ENCODE measurements at regions of chr7 and their contacts with region 1.

Region 1: DNA sequence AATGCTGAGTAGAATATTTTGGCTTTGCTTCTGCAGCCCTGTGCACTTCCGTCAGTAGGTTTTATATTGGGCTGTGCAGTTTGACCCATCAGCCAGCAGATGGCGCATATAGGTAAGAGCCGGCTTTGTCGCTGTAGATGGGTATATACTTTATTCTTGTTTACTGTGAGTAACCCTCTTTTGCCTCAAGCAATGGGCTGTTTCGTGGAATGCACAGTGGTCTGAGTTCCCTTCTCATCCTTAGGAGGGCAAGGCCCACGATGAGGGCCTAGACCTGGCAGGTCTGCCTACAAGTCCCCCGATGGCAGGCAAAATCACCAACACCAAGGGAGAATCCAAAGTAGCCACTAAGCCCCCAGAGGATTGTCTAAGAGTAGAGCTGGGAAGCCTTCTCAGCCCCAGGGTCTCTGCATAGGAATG is 1002.9 kb upstream of the KCND2 start:
- DNase-seq: peak; percentile 15 to 92 (median 54)

Region 2: DNA sequence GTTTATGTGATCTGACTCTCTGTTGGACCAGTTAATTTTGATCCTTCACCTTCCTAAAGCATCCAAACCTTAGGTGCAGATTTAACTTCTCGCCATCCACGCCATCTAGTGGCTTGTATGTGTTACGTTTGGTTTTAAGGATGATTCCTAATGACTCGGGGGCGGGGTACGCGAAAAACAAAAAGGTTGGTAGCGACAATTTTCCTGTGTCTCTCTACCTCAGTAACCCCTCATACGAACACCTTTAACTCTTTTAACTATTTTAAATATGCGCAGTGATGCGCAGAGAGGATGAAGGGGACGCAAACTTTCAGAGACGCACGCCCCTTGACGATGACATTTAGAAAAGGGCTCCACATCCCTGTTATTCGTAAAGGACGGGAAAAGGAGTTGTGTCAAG is 1002.2 kb after region 1 on chr7:
- intact Hi-C with region 1: loop called (anchors 2 kb)
- DNase-seq: peak in 1 of 10 donors; percentile 29

Region 3: GRCh38 chr7:120554960-120555571 is 1285.0 kb after region 1 on chr7:
- intact Hi-C with region 1: loop called (anchors 5 kb)
- DNase-seq: peak in 5 of 10 donors; percentile 12 to 64 (median 33)